Posterior cingulate gyrus (tissue), 11 donors: ENCODE measurements at regions of chr5 and their contacts with region 1.

Region 1: GRCh38 chr5:64595031-64595855 is 89.4 kb downstream of the RGS7BP start:
- DNase-seq: peak in 8 of 10 donors; percentile 17 to 90 (median 46)

Region 2: GRCh38 chr5:64505769-64506566 is 89.3 kb before region 1 on chr5 and contains the start of gene RGS7BP:
- intact Hi-C with region 1: loop called (anchors 10 kb)
- DNase-seq: peak; percentile 32 to 96 (median 73)